ENCODE measurements at regions of chr10 and their contacts with region 1.

Region 1: DNA sequence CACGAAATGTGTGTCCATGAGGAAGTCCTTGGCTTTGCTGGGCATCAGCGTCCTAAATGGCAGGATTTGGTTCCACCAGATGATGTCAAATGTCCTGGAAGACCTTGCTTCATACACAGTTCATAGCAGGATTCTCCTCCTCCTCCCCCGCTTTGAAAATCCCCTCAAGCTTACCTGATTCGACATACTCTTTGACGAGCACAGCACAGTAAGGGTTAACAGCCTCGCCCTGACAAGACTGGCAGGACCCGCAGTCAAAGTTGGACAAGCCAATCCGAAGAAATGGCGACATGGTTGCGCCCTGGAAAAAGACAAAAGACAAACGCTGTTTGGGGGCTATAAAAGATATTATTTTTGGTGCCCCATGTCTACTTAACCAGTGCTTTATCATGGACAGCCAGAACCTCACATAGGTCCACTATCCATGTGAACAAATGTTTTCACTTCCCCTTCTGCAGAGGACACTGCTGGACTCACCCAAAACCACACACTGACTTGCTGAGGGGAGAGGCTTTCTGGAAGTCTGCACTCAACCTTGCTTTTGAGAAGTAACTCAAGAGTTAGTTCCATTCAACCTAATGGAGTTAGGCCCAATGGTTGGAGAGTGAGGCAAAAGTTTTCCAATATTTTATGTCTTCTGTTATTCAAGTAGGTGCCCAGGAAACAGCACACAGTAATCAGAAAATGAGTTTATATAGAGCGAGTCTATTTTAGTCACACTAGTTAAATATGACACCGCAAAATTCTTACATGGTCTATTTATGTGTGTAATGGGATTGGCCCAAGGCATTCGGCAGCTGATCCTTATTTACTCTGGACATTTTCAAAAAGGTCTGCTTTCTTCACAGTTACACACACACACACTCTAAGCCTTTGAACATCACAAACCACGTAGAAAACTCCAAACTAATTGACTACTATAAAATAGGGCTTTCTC is 65.0 kb downstream of the PRKCQ start:
- DNase-seq: no peak
- ATAC-seq: peak; percentile 74
- H3K4me3 ChIP-seq: no peak overlapping the region
- H3K4me3 Mint-ChIP-seq: peak overlapping the region in 1 of 10 donors; percentile 12
- H3K27ac ChIP-seq: no peak overlapping the region
- H3K27ac Mint-ChIP-seq: peak overlapping the region in 7 of 9 donors; percentile 17 to 83 (median 50)
- H3K4me1 ChIP-seq: peaks cover 35 to 48% of the 10 kb centered on the region in 2 donors
- H3K4me1 Mint-ChIP-seq: peaks cover 49 to 92% (median 80%) of the 10 kb centered on the region in 7 donors
- H3K27me3 ChIP-seq: no peaks in the 10 kb centered on the region
- H3K27me3 Mint-ChIP-seq: no peaks in the 10 kb centered on the region

Region 2: GRCh38 chr10:6445501-6446316 is 69.4 kb before region 1 on chr10:
- CTCF ChIA-PET with region 1: interaction called, 5 read pairs
- POLR2A ChIA-PET with region 1: no interaction called
- intact Hi-C with region 1: loop called in 1 of 2 experiments (anchors 2 kb)
- DNase-seq: peak in 8 of 9 donors; percentile 28 to 49 (median 43)
- ATAC-seq: peak; percentile 64
- H3K4me3 ChIP-seq: no peak overlapping the region
- H3K4me3 Mint-ChIP-seq: peak overlapping the region in 5 of 10 donors; percentile 0 to 60 (median 30)
- H3K27ac ChIP-seq: peak overlapping the region; percentile 17
- H3K27ac Mint-ChIP-seq: peak overlapping the region; percentile 4 to 84 (median 66)
- H3K4me1 ChIP-seq: no peaks in the 10 kb centered on the region
- H3K4me1 Mint-ChIP-seq: peaks cover 10 to 49% (median 31%) of the 10 kb centered on the region in 7 donors
- H3K27me3 ChIP-seq: no peaks in the 10 kb centered on the region
- H3K27me3 Mint-ChIP-seq: no peaks in the 10 kb centered on the region

Region 3: DNA sequence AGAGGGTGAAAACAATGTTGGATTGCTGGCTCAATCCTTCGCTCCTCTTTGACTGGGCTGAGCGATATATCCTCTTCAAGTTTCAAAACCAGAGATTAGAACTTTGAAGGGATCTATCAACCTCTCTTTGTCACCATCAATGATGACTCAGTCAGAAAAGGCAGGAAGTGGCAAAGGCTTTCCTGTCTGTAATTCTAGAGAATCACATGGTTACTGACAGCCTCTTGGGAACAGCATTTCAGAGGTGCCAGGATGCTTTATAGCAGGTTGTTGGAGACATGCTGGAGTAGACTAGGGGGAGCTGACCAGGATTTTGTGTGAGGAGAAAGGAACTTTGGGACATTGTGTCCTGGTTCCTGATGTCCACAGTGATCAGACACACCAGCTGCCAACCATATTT is 16.3 kb before region 1 on chr10:
- CTCF ChIA-PET with region 1: interaction called, 5 read pairs
- POLR2A ChIA-PET with region 1: interaction called, 3 read pairs
- intact Hi-C with region 1: loop called in 1 of 2 experiments (anchors 2 kb)
- DNase-seq: peak in 8 of 9 donors; percentile 48 to 75 (median 67)
- ATAC-seq: peak; percentile 85
- H3K4me3 ChIP-seq: no peak overlapping the region
- H3K4me3 Mint-ChIP-seq: peak overlapping the region; percentile 13 to 86 (median 59)
- H3K27ac ChIP-seq: peak overlapping the region; percentile 36
- H3K27ac Mint-ChIP-seq: peak overlapping the region; percentile 81 to 94 (median 90)
- H3K4me1 ChIP-seq: peaks cover 33 to 49% of the 10 kb centered on the region in 2 donors
- H3K4me1 Mint-ChIP-seq: peaks cover 24 to 47% (median 43%) of the 10 kb centered on the region in 7 donors
- H3K27me3 ChIP-seq: no peaks in the 10 kb centered on the region
- H3K27me3 Mint-ChIP-seq: no peaks in the 10 kb centered on the region

Region 4: GRCh38 chr10:6542999-6543430 is 27.9 kb after region 1 on chr10:
- CTCF ChIA-PET with region 1: interaction called, 7 read pairs
- POLR2A ChIA-PET with region 1: interaction called, 11 read pairs
- intact Hi-C with region 1: loop called in 1 of 2 experiments (anchors 2 kb)
- DNase-seq: peak in 8 of 9 donors; percentile 45 to 83 (median 78)
- ATAC-seq: peak; percentile 90
- H3K4me3 ChIP-seq: peak overlapping the region; percentile 64
- H3K4me3 Mint-ChIP-seq: peak overlapping the region; percentile 79 to 95 (median 88)
- H3K27ac ChIP-seq: peak overlapping the region; percentile 73
- H3K27ac Mint-ChIP-seq: peak overlapping the region; percentile 97 to 100 (median 99)
- H3K4me1 ChIP-seq: peaks cover 55 to 66% of the 10 kb centered on the region in 2 donors
- H3K4me1 Mint-ChIP-seq: peaks cover 43 to 90% (median 76%) of the 10 kb centered on the region in 7 donors
- H3K27me3 ChIP-seq: no peaks in the 10 kb centered on the region
- H3K27me3 Mint-ChIP-seq: no peaks in the 10 kb centered on the region

Region 5: DNA sequence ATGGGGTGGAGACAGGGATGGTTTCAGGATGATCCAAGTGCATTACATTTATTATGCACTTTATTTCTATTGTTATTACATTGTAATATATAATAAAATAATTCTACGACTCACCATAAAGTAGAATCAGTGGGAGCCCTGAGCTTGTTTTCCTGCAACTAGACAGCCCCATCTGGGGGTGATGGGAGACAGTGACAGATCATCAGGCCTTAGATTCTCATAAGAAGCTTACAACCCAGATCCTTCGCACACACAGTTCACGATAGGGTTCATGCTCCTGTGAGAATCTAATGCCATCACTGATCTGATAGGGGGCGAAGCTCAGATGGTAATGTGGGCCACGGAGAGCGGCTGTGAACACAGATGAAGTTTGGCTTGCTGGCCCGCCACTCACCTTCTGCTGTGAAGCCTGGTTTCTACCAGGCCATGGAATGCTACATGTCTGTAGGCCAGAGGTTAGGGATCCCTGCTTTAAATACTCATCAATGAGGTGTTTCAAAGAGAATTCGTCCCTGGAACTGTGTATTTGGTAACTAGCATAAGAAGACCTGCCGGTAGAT is 86.2 kb after region 1 on chr10:
- CTCF ChIA-PET with region 1: interaction called, 5 read pairs
- POLR2A ChIA-PET with region 1: interaction called, 4 read pairs
- intact Hi-C with region 1: loop called in 1 of 2 experiments (anchors 1 kb)
- DNase-seq: peak in 6 of 9 donors; percentile 62 to 71 (median 65)
- ATAC-seq: peak; percentile 65
- H3K4me3 ChIP-seq: no peak overlapping the region
- H3K4me3 Mint-ChIP-seq: peak overlapping the region; percentile 52 to 86 (median 67)
- H3K27ac ChIP-seq: peak overlapping the region; percentile 63
- H3K27ac Mint-ChIP-seq: peak overlapping the region; percentile 60 to 100 (median 96)
- H3K4me1 ChIP-seq: peaks cover 17 to 56% of the 10 kb centered on the region in 2 donors
- H3K4me1 Mint-ChIP-seq: peaks cover 37 to 94% (median 86%) of the 10 kb centered on the region in 7 donors
- H3K27me3 ChIP-seq: no peaks in the 10 kb centered on the region
- H3K27me3 Mint-ChIP-seq: no peaks in the 10 kb centered on the region

Region 6: GRCh38 chr10:6667679-6668270 is 152.7 kb after region 1 on chr10:
- CTCF ChIA-PET with region 1: no interaction called
- POLR2A ChIA-PET with region 1: no interaction called
- intact Hi-C with region 1: loop called in 1 of 2 experiments (anchors 1 kb)
- DNase-seq: peak in 6 of 9 donors; percentile 17 to 45 (median 30)
- ATAC-seq: peak; percentile 59
- H3K4me3 ChIP-seq: no peak overlapping the region
- H3K4me3 Mint-ChIP-seq: no peak overlapping the region
- H3K27ac ChIP-seq: no peak overlapping the region
- H3K27ac Mint-ChIP-seq: no peak overlapping the region
- H3K4me1 ChIP-seq: peaks cover 0 to 10% of the 10 kb centered on the region in 2 donors
- H3K4me1 Mint-ChIP-seq: peaks cover 12 to 35% (median 24%) of the 10 kb centered on the region in 7 donors
- H3K27me3 ChIP-seq: no peaks in the 10 kb centered on the region
- H3K27me3 Mint-ChIP-seq: peaks cover 0 to 13% (median 0%) of the 10 kb centered on the region in 5 donors

Measured in naive thymus-derived CD4-positive, alpha-beta T cell (primary cell).